Posterior cingulate gyrus (tissue), 11 donors: ENCODE measurements at regions of chr3 and their contacts with region 1.

Region 1: DNA sequence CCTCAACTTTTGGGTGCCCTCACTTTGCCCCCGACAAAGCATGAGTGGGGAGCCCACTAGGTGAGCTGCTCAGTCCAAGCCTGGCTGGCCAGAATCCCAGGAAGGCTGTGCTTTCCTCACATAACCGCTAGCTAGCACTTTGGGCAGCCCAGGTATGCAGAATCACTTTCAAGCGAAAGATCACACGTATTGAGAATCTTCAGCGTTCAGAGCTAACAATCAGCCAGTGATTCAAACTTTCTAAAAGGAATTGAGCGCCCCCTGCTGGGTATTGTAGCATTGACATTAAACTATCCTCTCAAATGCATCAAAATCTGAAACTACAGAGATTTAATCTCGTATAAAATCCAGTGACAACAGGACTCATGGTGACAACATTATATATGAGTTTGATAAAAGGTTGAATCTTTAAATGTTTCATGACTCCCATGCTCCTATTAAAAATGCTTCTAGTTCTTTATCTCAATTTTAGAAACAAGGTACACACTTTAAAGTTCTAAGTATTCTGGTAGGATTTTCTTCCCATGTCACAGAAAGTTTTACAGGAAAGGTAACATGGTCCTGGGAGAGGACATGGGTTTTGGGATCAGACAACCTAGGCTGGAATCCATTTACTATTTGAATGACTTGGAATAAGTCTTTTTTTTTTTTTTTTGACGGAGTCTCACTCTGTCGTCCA is 11.8 kb downstream of the ANAPC13 start:
- DNase-seq: peak in 6 of 10 donors; percentile 55 to 85 (median 79)

Region 2: GRCh38 chr3:133927540-133928066 is 546.4 kb before region 1 on chr3:
- intact Hi-C with region 1: loop called (anchors 10 kb)
- DNase-seq: peak in 7 of 10 donors; percentile 34 to 93 (median 47)

Region 3: DNA sequence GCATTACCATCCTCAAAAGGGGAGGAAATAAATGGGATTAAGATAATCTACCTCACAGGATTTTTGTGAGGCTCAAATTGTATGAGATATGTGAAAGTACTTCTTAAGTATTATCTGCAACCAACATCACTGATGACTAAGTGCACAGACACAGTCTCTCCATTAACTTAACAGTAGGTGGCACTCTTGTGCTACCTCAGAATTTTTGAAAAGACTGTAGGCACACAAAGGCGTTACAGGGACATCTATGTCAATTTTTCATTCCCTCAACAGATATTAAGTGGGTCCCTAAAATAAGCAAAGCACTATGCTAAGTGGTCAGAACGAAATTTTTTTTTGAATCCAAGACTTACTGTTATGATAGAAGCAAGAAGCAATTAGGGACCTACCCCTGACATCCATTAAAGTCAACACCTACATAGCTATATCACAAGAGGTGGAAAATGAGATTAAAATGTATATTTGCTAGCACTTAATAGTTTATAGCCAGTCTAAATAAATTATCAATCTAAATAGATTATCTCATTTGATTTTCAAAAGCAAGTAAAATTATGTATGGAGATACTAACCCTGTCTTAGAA is 276.2 kb before region 1 on chr3:
- intact Hi-C with region 1: loop called (anchors 5 kb)
- DNase-seq: no peak

Region 4: DNA sequence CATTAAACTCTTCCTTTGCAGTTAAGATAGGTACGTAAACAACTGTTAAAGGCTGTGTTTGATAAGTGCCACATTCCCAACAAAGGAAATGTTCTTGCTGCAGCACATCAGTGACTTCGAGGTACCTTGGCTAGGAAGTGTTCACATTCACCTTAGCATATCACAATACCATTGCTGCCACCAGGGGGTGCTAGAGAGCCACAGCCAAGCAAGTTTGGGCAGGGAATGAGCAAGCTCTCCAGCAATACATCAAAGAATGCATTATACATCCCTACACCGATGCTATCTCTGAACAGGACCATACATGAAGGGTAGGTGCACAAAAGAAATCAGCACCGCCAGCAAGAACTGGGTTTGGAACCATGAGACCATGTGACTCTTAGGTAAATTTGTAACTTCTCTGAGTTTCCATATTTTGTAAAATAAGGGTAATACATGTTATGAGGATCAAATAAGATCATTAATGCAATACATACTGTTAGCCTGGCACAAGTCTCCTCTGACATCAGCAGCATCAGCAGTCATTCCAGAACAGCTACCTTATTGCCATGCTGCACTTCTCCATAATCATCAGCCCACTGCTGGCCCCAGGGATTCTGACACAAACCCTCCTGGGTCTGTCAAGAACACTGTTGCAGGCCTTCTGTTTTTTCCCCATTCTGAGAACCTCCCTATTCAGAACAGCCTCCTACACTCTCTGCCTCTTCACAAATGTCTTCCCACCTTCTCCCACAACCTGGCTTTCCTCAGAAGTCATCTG is 260.9 kb before region 1 on chr3:
- intact Hi-C with region 1: loop called (anchors 1 kb)
- DNase-seq: peak; percentile 62 to 98 (median 90)

Region 5: GRCh38 chr3:134308350-134308891 is 165.6 kb before region 1 on chr3:
- intact Hi-C with region 1: loop called (anchors 1 kb)
- DNase-seq: peak; percentile 70 to 97 (median 88)

Region 6: DNA sequence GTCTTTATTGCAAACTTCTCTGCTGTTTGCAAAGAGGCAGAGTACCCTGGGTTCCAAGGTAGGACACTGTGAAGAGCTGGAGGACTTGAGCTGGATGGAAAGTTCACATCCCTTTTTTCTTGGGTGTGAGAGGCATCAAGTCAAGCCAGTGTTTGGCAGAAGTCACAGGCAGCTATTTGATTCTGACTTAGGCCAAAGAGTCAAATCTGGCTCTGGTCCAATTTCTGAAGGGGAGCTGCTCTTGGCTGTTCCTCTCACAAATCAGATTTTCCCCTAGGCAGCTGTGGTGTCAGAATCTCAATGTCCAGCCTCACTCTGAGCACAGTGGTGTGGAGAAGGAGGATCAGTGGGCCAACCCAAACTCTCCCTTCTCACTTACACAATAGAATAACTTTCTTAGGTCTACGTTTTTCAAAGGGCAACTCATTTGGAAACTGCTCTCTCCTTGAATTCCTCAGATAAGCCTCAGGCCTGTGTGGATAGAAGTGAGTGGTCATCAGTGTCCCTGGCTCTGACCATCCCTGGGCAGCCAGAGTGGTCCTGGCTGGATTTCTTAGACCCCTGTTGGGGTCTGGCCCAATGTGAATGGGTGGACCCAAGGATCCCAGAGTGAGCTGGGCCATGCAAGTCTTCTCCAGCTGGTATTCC is 81.5 kb before region 1 on chr3:
- intact Hi-C with region 1: no loop called
- DNase-seq: peak in 1 of 10 donors; percentile 30

Region 7: GRCh38 chr3:134536781-134537180 is 62.8 kb after region 1 on chr3:
- intact Hi-C with region 1: no loop called
- DNase-seq: no peak